IMR-90 (cell line): ENCODE measurements at regions of chr1 and their contacts with region 1.

Region 1: GRCh38 chr1:200620273-200621131 is at the start of gene KIF14:
- DNase-seq: peak; percentile 82
- ATAC-seq: peak; percentile 100
- H3K4me3 ChIP-seq: peak within 1 kb of the TSS; percentile 88
- H3K27ac ChIP-seq: peak within 1 kb of the TSS; percentile 73
- H3K4me1 ChIP-seq: no peaks in the 10 kb centered on the region; the same call in 1 of the 2 replicates
- H3K27me3 ChIP-seq: no peaks in the 10 kb centered on the region
- CTCF ChIP-seq: no peak
- POLR2A ChIP-seq: peak; percentile 80
- RAD21 ChIP-seq: peak; percentile 13; the same call in 1 of the 2 replicates
- total RNA-seq, gene KIF14: 4.7 and 10.8 TPM in 2 replicates

Region 2: GRCh38 chr1:200738740-200739498 is 118.4 kb after region 1 on chr1 and contains the start of gene CAMSAP2:
- CTCF ChIA-PET with region 1: no interaction called
- POLR2A ChIA-PET with region 1: no interaction called
- dilution Hi-C with region 1: no loop called
- in situ Hi-C with region 1: no loop called
- intact Hi-C with region 1: loop called (anchors 2 kb)
- DNase-seq: peak; percentile 86
- ATAC-seq: peak; percentile 83
- H3K4me3 ChIP-seq: peak within 1 kb of the TSS; percentile 96
- H3K27ac ChIP-seq: peak within 1 kb of the TSS; percentile 100
- H3K4me1 ChIP-seq: no peaks in the 10 kb centered on the region; the same call in 1 of the 2 replicates
- H3K27me3 ChIP-seq: no peaks in the 10 kb centered on the region
- CTCF ChIP-seq: no peak
- POLR2A ChIP-seq: peak; percentile 79
- RAD21 ChIP-seq: no peak
- total RNA-seq, gene CAMSAP2: 29.4 and 43.0 TPM in 2 replicates

Region 3: GRCh38 chr1:200802865-200803512 is 182.5 kb after region 1 on chr1:
- CTCF ChIA-PET with region 1: interaction called, 7 read pairs
- POLR2A ChIA-PET with region 1: no interaction called
- dilution Hi-C with region 1: no loop called
- in situ Hi-C with region 1: loop called (anchors 5 kb)
- intact Hi-C with region 1: loop called (anchors 1 kb)
- DNase-seq: peak; percentile 84
- ATAC-seq: peak; percentile 99
- H3K4me3 ChIP-seq: no peak overlapping the region
- H3K27ac ChIP-seq: no peak overlapping the region
- H3K4me1 ChIP-seq: no peaks in the 10 kb centered on the region
- H3K27me3 ChIP-seq: no peaks in the 10 kb centered on the region
- CTCF ChIP-seq: peak; percentile 89
- POLR2A ChIP-seq: no peak
- RAD21 ChIP-seq: peak; percentile 91

Region 4: DNA sequence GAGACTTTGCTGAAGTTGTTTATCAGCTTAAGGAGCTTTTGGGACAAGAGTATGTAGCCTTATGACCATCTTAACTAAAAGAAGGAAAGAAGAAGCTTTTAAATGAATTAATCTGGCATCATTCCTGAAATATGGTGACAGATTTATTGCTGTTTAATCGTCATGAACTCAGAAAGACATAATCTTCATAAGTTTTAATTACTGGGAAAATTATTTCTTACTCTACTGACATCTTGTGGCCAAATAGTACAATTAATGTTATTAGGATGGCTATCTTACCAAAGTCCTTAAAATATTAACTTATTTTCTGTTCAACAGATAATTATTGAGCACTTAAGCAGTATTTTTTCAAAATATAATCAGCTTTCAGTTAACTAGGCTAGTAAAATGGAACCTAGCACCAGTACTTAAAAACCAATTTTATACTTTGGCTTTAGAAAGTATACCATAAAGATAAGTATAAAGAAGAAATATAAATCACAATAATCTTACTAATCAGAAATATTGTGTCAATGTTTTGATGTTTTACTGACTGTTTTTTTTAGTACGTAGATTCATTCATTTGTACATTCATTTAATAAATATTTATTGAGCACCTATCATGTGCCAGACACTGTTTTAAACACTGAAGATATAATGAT is 217.5 kb after region 1 on chr1:
- CTCF ChIA-PET with region 1: interaction called, 8 read pairs
- POLR2A ChIA-PET with region 1: no interaction called
- dilution Hi-C with region 1: no loop called
- in situ Hi-C with region 1: no loop called
- intact Hi-C with region 1: loop called (anchors 1 kb)
- DNase-seq: peak; percentile 41
- ATAC-seq: peak; percentile 35
- H3K4me3 ChIP-seq: no peak overlapping the region
- H3K27ac ChIP-seq: no peak overlapping the region
- H3K4me1 ChIP-seq: no peaks in the 10 kb centered on the region; the same call in 1 of the 2 replicates
- H3K27me3 ChIP-seq: no peaks in the 10 kb centered on the region
- CTCF ChIP-seq: peak; percentile 50
- POLR2A ChIP-seq: no peak
- RAD21 ChIP-seq: peak; percentile 32

Region 5: GRCh38 chr1:200971955-200972711 is 351.6 kb after region 1 on chr1:
- CTCF ChIA-PET with region 1: no interaction called
- POLR2A ChIA-PET with region 1: no interaction called
- dilution Hi-C with region 1: no loop called
- in situ Hi-C with region 1: no loop called
- intact Hi-C with region 1: loop called (anchors 10 kb)
- DNase-seq: peak; percentile 38
- ATAC-seq: peak; percentile 77
- H3K4me3 ChIP-seq: no peak overlapping the region
- H3K27ac ChIP-seq: no peak overlapping the region
- H3K4me1 ChIP-seq: no peaks in the 10 kb centered on the region
- H3K27me3 ChIP-seq: peaks cover 5% of the 10 kb centered on the region; the same call in 1 of the 2 replicates
- CTCF ChIP-seq: peak; percentile 71
- POLR2A ChIP-seq: no peak
- RAD21 ChIP-seq: peak; percentile 71

Region 6: GRCh38 chr1:201042779-201043461 is 422.4 kb after region 1 on chr1:
- CTCF ChIA-PET with region 1: no interaction called
- POLR2A ChIA-PET with region 1: no interaction called
- dilution Hi-C with region 1: no loop called
- in situ Hi-C with region 1: loop called (anchors 10 kb)
- intact Hi-C with region 1: loop called (anchors 1 kb)
- DNase-seq: peak; percentile 70
- ATAC-seq: peak; percentile 97
- H3K4me3 ChIP-seq: no peak overlapping the region
- H3K27ac ChIP-seq: no peak overlapping the region
- H3K4me1 ChIP-seq: no peaks in the 10 kb centered on the region
- H3K27me3 ChIP-seq: peaks cover 24% of the 10 kb centered on the region
- CTCF ChIP-seq: peak; percentile 79
- POLR2A ChIP-seq: no peak
- RAD21 ChIP-seq: peak; percentile 81

Region 7: GRCh38 chr1:201114236-201115131 is 494.0 kb after region 1 on chr1:
- CTCF ChIA-PET with region 1: interaction called, 3 read pairs
- POLR2A ChIA-PET with region 1: no interaction called
- dilution Hi-C with region 1: no loop called
- in situ Hi-C with region 1: no loop called
- intact Hi-C with region 1: loop called (anchors 2 kb)
- DNase-seq: peak; percentile 89
- ATAC-seq: peak; percentile 99
- H3K4me3 ChIP-seq: peak overlapping the region; percentile 67
- H3K27ac ChIP-seq: no peak overlapping the region; the same call in 1 of the 2 replicates
- H3K4me1 ChIP-seq: peaks cover 2% of the 10 kb centered on the region; the same call in 1 of the 2 replicates
- H3K27me3 ChIP-seq: peaks cover 54% of the 10 kb centered on the region
- CTCF ChIP-seq: peak; percentile 88
- POLR2A ChIP-seq: no peak
- RAD21 ChIP-seq: peak; percentile 87